ENCODE measurements at regions of chr13 and their contacts with region 1.

Region 1: DNA sequence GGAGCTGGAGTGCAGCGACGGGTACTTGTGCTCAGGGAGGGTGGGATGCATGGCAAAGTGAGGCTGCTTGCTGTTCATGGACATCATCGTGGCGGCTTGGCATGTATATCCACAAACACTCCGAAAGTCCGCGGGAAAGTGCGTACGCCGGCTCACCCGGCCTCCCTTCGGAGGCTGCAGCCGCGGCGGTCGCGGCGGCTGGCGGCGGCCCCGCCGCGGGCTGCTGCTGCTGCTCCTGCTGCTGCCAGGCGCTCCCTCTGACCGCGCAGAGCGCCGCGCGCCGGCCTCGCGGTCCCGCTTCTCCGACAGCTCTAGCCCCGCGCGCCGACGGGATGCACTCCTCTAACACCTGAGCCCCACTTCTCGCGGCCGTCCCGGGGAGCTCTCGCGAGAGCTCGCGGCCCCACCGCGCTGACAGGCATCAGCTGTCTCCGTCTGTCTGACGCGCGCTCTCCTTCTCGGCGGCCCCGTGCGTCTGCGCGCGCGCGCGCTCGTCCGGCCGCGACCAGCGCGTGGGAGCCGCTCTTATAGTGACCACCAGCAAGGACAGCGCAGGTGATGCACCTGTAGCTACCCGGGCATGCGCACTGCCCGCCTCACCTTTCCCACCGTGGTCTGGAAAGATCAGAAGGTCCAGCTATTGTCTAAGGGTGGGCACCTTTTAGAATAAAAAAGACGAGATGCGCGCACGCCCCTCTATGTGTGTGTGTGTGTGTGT is at the start of gene POU4F1:
- DNase-seq: peak; percentile 91 to 96
- H3K4me3 ChIP-seq: peak within 1 kb of the TSS; percentile 78
- H3K4me3 Mint-ChIP-seq: peak within 1 kb of the TSS; percentile 78
- H3K27ac Mint-ChIP-seq: peak within 1 kb of the TSS; percentile 35
- H3K4me1 ChIP-seq: peaks cover 7% of the 10 kb centered on the region; the same call in 1 of the 2 replicates
- H3K4me1 Mint-ChIP-seq: no peaks in the 10 kb centered on the region
- H3K27me3 ChIP-seq: no peaks in the 10 kb centered on the region
- H3K27me3 Mint-ChIP-seq: peaks cover 3% of the 10 kb centered on the region
- CTCF ChIP-seq: no peak
- total RNA-seq, gene POU4F1: 7.3 and 8.1 TPM in 2 replicates

Region 2: DNA sequence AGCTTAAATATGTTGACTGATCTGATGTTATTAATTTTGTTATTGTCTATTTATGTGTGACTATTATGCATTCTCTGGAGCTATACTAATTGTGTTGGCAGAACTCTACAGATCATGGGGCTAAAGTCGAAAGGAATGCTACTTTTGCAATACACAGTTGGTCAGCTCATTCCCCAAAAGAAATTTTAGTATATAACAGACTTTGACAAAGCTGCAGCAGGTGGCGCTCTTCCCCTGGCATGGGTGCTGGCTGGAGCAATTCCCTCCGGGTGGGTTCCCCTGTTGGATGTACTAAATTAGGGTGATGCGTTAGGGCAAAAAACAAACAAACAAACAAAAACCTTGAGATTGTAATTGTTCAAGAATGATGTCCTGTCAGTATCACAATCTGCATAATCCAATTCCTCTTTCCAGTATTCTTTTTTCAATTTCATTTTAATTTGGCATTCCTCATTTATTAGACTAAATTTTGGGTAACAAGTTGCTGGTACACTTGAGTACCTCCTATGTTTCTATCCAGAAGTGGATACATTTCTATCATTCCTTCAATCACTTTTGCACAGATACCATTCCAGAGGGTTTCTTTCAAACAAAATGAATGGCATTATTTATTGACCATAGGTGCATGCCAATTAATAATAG is 362.0 kb before region 1 on chr13:
- CTCF ChIA-PET with region 1: interaction called, 4 read pairs
- POLR2A ChIA-PET with region 1: no interaction called
- intact Hi-C with region 1: loop called (anchors 10 kb)
- DNase-seq: peak; percentile 41 to 56
- H3K4me3 ChIP-seq: no peak overlapping the region
- H3K4me3 Mint-ChIP-seq: no peak overlapping the region
- H3K27ac Mint-ChIP-seq: no peak overlapping the region
- H3K4me1 ChIP-seq: no peaks in the 10 kb centered on the region
- H3K4me1 Mint-ChIP-seq: peaks cover 7% of the 10 kb centered on the region
- H3K27me3 ChIP-seq: no peaks in the 10 kb centered on the region
- H3K27me3 Mint-ChIP-seq: peaks cover 3% of the 10 kb centered on the region
- CTCF ChIP-seq: peak; percentile 80 to 86

Region 3: GRCh38 chr13:78317030-78317429 is 286.4 kb before region 1 on chr13:
- CTCF ChIA-PET with region 1: no interaction called
- POLR2A ChIA-PET with region 1: no interaction called
- intact Hi-C with region 1: loop called (anchors 10 kb)
- DNase-seq: peak in 1 of 2 experiments; percentile 6
- H3K4me3 ChIP-seq: no peak overlapping the region
- H3K4me3 Mint-ChIP-seq: no peak overlapping the region
- H3K27ac Mint-ChIP-seq: no peak overlapping the region
- H3K4me1 ChIP-seq: no peaks in the 10 kb centered on the region
- H3K4me1 Mint-ChIP-seq: no peaks in the 10 kb centered on the region
- H3K27me3 ChIP-seq: no peaks in the 10 kb centered on the region
- H3K27me3 Mint-ChIP-seq: peaks cover 6% of the 10 kb centered on the region
- CTCF ChIP-seq: peak; percentile 23 to 55

Region 4: GRCh38 chr13:78658635-78659449 is 55.4 kb after region 1 on chr13 and contains the start of gene OBI1:
- CTCF ChIA-PET with region 1: interaction called, 7 read pairs
- POLR2A ChIA-PET with region 1: interaction called, 3 read pairs
- intact Hi-C with region 1: loop called (anchors 1 kb)
- DNase-seq: peak; percentile 93 to 96
- H3K4me3 ChIP-seq: peak within 1 kb of the TSS; percentile 71
- H3K4me3 Mint-ChIP-seq: peak within 1 kb of the TSS; percentile 95
- H3K27ac Mint-ChIP-seq: peak within 1 kb of the TSS; percentile 94
- H3K4me1 ChIP-seq: peaks cover 8% of the 10 kb centered on the region
- H3K4me1 Mint-ChIP-seq: peaks cover 9% of the 10 kb centered on the region
- H3K27me3 ChIP-seq: no peaks in the 10 kb centered on the region
- H3K27me3 Mint-ChIP-seq: no peaks in the 10 kb centered on the region
- CTCF ChIP-seq: no peak
- total RNA-seq, gene OBI1: 17.9 and 19.9 TPM in 2 replicates